ENCODE measurements at regions of chr18 and their contacts with region 1.

Region 1: DNA sequence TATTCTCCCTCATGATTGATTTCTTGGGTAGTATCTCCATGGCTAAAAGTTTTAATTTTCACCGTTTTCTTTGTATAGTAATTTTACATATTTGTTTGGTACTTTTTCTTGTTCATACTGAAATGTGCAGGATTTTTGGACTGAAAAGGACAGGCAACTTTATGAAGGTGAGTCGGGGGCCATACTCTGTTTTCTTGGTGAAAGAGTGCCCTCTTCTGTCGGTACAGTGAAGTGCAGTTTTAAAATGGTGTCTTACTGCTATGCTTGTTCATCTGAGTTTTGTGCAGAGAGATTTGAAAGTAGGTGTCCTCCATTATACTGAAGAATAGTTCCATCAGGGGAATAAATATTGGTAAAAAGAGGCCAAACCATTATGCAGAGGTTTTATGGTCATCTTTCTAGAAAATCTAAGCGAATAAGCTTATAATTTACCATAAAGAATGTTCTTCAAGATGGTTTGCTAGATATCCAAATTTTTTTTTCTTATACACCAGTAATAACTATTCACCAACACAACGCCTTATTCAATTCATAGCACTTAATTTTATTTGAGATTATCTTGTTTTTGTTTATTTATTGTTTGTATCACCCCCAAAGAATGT is 8.7 kb upstream of the SERPINB13 start:
- DNase-seq: peak in 1 of 3 donors; percentile 43
- ATAC-seq: no peak
- H3K4me3 ChIP-seq: no peak overlapping the region
- H3K4me1 ChIP-seq: no peaks in the 10 kb centered on the region
- CTCF ChIP-seq: no peak

Region 2: GRCh38 chr18:63487676-63488075 is 90.8 kb before region 1 on chr18:
- intact Hi-C with region 1: no loop called
- DNase-seq: no peak
- ATAC-seq: no peak
- H3K4me3 ChIP-seq: no peak overlapping the region
- H3K4me1 ChIP-seq: no peaks in the 10 kb centered on the region
- CTCF ChIP-seq: no peak

Region 3: DNA sequence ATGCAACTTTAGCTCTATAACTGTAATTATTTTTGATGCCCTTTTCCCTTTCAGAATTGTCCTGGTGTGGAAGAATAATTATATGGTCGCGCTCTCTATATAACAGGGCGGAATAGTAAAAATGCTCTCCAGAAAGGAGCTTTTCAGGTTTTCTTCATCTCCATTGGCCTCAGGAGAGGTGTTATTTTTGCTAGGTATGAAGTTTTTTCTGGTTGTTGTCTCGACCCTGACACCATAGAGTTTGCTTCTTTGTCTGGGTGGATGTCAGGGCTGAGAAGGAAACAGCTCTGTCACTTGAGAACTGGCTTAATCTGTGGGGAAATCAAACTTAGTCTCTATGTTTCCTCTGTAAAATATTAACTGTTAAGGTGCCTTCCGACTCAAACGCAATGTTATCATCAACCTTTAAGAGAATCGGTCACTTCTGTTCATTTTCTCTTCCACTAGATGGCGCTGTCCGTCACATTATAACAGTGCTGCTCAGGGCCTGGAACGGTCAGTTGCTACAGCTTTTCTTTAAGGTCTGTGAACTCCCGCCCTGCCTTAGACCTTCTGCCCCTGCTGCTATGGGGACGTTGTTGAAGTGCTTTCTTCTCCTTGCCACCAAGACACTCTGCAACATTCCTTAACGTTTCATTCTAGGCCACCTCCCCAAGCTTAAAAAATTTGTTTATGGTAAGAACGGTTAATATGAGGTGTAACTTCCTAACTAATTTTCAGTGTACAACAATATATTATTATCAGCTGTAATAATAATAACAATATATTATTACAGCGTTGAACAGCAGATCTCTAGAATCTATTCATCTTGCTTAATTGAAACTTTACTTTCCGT is 60.1 kb before region 1 on chr18:
- intact Hi-C with region 1: loop called (anchors 2 to 10 kb)
- DNase-seq: peak in 1 of 3 donors; percentile 77
- ATAC-seq: peak; percentile 87
- H3K4me3 ChIP-seq: no peak overlapping the region
- H3K4me1 ChIP-seq: no peaks in the 10 kb centered on the region
- CTCF ChIP-seq: peak; percentile 32

Region 4: GRCh38 chr18:63523660-63524059 is 54.8 kb before region 1 on chr18:
- intact Hi-C with region 1: loop called (anchors 2 to 10 kb)
- DNase-seq: no peak
- ATAC-seq: no peak
- H3K4me3 ChIP-seq: no peak overlapping the region
- H3K4me1 ChIP-seq: no peaks in the 10 kb centered on the region
- CTCF ChIP-seq: no peak

Region 5: GRCh38 chr18:63775166-63775730 is 196.8 kb after region 1 on chr18 and contains the start of gene SERPINB7:
- intact Hi-C with region 1: no loop called
- DNase-seq: no peak
- ATAC-seq: no peak
- H3K4me3 ChIP-seq: no peak within 1 kb of the TSS
- H3K4me1 ChIP-seq: no peaks in the 10 kb centered on the region
- CTCF ChIP-seq: no peak
- total RNA-seq, gene SERPINB7: not detected

Measured in mucosa of descending colon (tissue), 3 donors.